ENCODE measurements at regions of chr3 and their contacts with region 1.

Region 1: GRCh38 chr3:100463002-100463401 is 29.4 kb upstream of the TMEM45A start:
- DNase-seq: no peak
- ATAC-seq: peak; percentile 85 to 90
- H3K4me3 ChIP-seq: no peak overlapping the region
- H3K27ac ChIP-seq: no peak overlapping the region
- H3K4me1 ChIP-seq: no peaks in the 10 kb centered on the region
- H3K27me3 ChIP-seq: no peaks in the 10 kb centered on the region
- CTCF ChIP-seq: peak; percentile 68

Region 2: GRCh38 chr3:100581650-100582049 is 118.6 kb after region 1 on chr3:
- intact Hi-C with region 1: loop called (anchors 10 kb)
- DNase-seq: no peak
- ATAC-seq: no peak
- H3K4me3 ChIP-seq: no peak overlapping the region
- H3K27ac ChIP-seq: no peak overlapping the region
- H3K4me1 ChIP-seq: no peaks in the 10 kb centered on the region
- H3K27me3 ChIP-seq: no peaks in the 10 kb centered on the region
- CTCF ChIP-seq: no peak

Measured in lower lobe of right lung (tissue), 2 donors.